Prostate gland (tissue), 2 donors: ENCODE measurements at regions of chr5 and their contacts with region 1.

Region 1: DNA sequence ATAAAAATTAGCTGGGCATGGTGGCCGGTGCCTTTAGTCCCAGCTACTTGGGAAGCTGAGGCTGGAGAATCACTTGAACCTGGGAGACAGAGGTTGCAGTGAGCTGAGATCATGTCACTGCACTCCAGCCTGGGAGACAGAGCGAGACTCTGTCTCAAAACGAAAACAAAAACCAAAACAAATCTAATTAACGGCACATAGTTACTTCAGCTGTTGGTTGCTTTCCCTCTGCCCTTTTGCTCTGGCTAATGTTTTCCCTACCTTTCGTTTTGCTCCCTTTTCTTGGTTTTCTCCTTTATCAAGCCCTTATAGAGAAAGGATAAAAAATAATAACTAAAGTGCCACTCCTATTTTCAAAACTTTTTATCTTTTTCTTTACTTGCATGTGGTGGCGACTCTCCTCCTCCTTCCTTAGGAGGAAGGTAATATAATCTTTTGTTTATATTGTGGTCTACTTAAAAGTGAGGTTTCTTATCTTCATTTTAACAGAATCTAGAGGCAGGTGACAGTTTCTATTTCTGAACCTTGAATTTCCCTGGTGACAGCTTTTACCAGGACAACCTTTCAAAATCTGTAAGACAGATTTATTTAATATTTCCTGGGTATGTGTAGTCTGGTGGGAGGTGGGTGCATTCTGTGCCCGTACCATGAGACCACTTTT is 125.4 kb downstream of the ARHGEF28 start:
- DNase-seq: no peak
- H3K4me3 ChIP-seq: no peak overlapping the region
- H3K27ac ChIP-seq: no peak overlapping the region
- H3K4me1 ChIP-seq: no peaks in the 10 kb centered on the region
- H3K27me3 ChIP-seq: no peaks in the 10 kb centered on the region
- CTCF ChIP-seq: no peak
- POLR2A ChIP-seq: no peak

Region 2: GRCh38 chr5:73625944-73626811 is 125.2 kb before region 1 on chr5 and contains the start of gene ARHGEF28:
- intact Hi-C with region 1: loop called (anchors 5 kb)
- DNase-seq: peak; percentile 68
- H3K4me3 ChIP-seq: peak within 1 kb of the TSS; percentile 50 to 52
- H3K27ac ChIP-seq: peak within 1 kb of the TSS; percentile 66 to 73
- H3K4me1 ChIP-seq: no peaks in the 10 kb centered on the region
- H3K27me3 ChIP-seq: no peaks in the 10 kb centered on the region
- CTCF ChIP-seq: peak in 1 of 4 experiments; percentile 6
- POLR2A ChIP-seq: peak; percentile 74
- total RNA-seq, gene ARHGEF28: 18.9 to 28.3 TPM

Region 3: DNA sequence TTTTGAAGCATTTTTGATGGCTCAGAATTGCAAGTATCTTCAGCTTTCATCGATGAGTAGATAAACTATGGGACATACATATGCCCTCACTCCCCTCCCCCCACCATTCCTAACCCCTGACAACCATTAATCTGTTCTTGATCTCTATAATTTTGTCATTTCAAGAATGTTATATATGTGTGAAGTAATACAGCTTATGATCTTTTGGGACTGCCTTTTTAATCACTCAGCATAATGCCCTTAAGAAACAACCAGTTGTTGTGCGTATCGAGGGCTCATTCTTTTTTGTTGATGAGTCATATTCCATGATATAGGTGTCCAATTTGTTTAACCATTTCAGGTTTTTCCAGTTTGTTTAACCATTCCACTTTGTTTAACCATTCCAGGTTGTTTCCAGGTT is 49.9 kb before region 1 on chr5:
- intact Hi-C with region 1: no loop called
- DNase-seq: no peak
- H3K4me3 ChIP-seq: no peak overlapping the region
- H3K27ac ChIP-seq: no peak overlapping the region
- H3K4me1 ChIP-seq: no peaks in the 10 kb centered on the region
- H3K27me3 ChIP-seq: no peaks in the 10 kb centered on the region
- CTCF ChIP-seq: no peak
- POLR2A ChIP-seq: no peak

Region 4: GRCh38 chr5:73733219-73733618 is 18.2 kb before region 1 on chr5:
- intact Hi-C with region 1: no loop called
- DNase-seq: no peak
- H3K4me3 ChIP-seq: no peak overlapping the region
- H3K27ac ChIP-seq: no peak overlapping the region
- H3K4me1 ChIP-seq: no peaks in the 10 kb centered on the region
- H3K27me3 ChIP-seq: no peaks in the 10 kb centered on the region
- CTCF ChIP-seq: no peak
- POLR2A ChIP-seq: no peak